CD8-positive, alpha-beta memory T cell (primary cell): ENCODE measurements at regions of chr6 and their contacts with region 1.

Region 1: GRCh38 chr6:6547110-6547879 is 41.2 kb upstream of the LY86 start:
- DNase-seq: peak; percentile 59 to 85 (median 70)
- H3K4me3 ChIP-seq: peak overlapping the region; percentile 52
- H3K4me3 Mint-ChIP-seq: peak overlapping the region; percentile 0 to 88 (median 78)
- H3K27ac ChIP-seq: no peak overlapping the region
- H3K27ac Mint-ChIP-seq: peak overlapping the region in 1 of 8 donors; percentile 20
- H3K4me1 ChIP-seq: no peaks in the 10 kb centered on the region
- H3K4me1 Mint-ChIP-seq: peaks cover 5 to 14% (median 7%) of the 10 kb centered on the region in 3 donors
- H3K27me3 ChIP-seq: peaks cover 25% of the 10 kb centered on the region
- H3K27me3 Mint-ChIP-seq: peaks cover 43 to 50% of the 10 kb centered on the region in 2 donors

Region 2: DNA sequence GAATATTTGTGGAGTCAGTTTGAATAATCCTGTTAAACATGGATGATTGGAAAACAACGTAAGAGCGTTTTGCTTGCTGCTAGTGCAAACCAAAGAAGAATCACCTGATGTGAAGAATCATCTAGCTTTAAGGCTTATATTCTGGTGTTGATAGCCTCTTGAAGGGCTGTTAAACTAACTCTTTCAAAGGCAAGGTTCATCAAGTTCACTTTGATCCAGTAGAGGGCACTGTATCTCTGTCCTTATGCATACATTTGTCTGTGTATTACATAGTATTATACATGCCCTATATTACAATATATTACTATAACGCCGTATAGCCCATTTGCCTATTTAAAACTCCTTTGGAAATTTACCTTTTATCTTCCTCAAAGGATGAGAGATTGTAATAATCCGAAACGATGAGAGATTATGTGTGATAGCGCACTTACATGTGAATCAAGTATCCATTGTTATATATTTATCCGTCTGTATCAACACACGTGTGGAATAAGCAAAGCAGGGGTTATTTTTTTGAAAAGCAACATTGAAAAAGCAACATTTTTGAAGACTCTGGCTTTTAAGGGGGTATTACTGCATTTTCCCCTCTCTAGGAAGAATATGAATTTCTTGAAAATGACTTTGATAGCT is 489.8 kb before region 1 on chr6:
- CTCF ChIA-PET with region 1: interaction called, 13 read pairs
- POLR2A ChIA-PET with region 1: no interaction called
- DNase-seq: peak in 2 of 5 donors; percentile 9 to 31
- H3K4me3 ChIP-seq: no peak overlapping the region
- H3K4me3 Mint-ChIP-seq: no peak overlapping the region
- H3K27ac ChIP-seq: no peak overlapping the region
- H3K27ac Mint-ChIP-seq: no peak overlapping the region
- H3K4me1 ChIP-seq: no peaks in the 10 kb centered on the region
- H3K4me1 Mint-ChIP-seq: no peaks in the 10 kb centered on the region
- H3K27me3 ChIP-seq: no peaks in the 10 kb centered on the region
- H3K27me3 Mint-ChIP-seq: peaks cover 24 to 64% of the 10 kb centered on the region in 2 donors

Region 3: GRCh38 chr6:6366803-6367202 is 180.5 kb before region 1 on chr6:
- CTCF ChIA-PET with region 1: no interaction called
- POLR2A ChIA-PET with region 1: no interaction called
- DNase-seq: no peak
- H3K4me3 ChIP-seq: no peak overlapping the region
- H3K4me3 Mint-ChIP-seq: no peak overlapping the region
- H3K27ac ChIP-seq: no peak overlapping the region
- H3K27ac Mint-ChIP-seq: no peak overlapping the region
- H3K4me1 ChIP-seq: no peaks in the 10 kb centered on the region
- H3K4me1 Mint-ChIP-seq: no peaks in the 10 kb centered on the region
- H3K27me3 ChIP-seq: no peaks in the 10 kb centered on the region
- H3K27me3 Mint-ChIP-seq: peaks cover 11 to 30% of the 10 kb centered on the region in 2 donors

Region 4: GRCh38 chr6:6461138-6461537 is 86.2 kb before region 1 on chr6:
- CTCF ChIA-PET with region 1: no interaction called
- POLR2A ChIA-PET with region 1: no interaction called
- DNase-seq: no peak
- H3K4me3 ChIP-seq: no peak overlapping the region
- H3K4me3 Mint-ChIP-seq: no peak overlapping the region
- H3K27ac ChIP-seq: no peak overlapping the region
- H3K27ac Mint-ChIP-seq: no peak overlapping the region
- H3K4me1 ChIP-seq: no peaks in the 10 kb centered on the region
- H3K4me1 Mint-ChIP-seq: no peaks in the 10 kb centered on the region
- H3K27me3 ChIP-seq: no peaks in the 10 kb centered on the region
- H3K27me3 Mint-ChIP-seq: peaks cover 18 to 44% of the 10 kb centered on the region in 2 donors

Region 5: DNA sequence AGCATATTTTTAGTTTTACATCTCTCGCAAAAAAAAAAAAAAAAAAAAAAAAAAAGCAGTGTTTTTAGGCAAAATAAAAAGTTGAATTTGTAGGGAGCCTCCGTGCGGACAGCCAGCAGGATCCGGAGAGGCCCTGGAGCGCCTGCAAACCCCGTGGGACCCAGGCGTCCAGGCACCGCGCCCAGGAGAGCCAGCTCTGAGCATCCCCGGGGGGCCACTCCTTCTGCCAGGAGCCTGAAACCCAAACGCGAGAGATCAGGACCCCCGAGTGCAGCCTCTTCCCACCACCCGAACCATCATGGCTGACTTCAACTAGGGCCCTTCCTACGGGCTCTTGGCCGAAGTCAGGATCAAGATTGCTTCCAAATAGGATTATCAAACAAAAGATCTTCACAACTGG is 12.9 kb before region 1 on chr6:
- CTCF ChIA-PET with region 1: interaction called, 10 read pairs
- POLR2A ChIA-PET with region 1: interaction called, 5 read pairs
- DNase-seq: no peak
- H3K4me3 ChIP-seq: no peak overlapping the region
- H3K4me3 Mint-ChIP-seq: no peak overlapping the region
- H3K27ac ChIP-seq: no peak overlapping the region
- H3K27ac Mint-ChIP-seq: no peak overlapping the region
- H3K4me1 ChIP-seq: no peaks in the 10 kb centered on the region
- H3K4me1 Mint-ChIP-seq: peaks cover 0 to 9% (median 5%) of the 10 kb centered on the region in 3 donors
- H3K27me3 ChIP-seq: no peaks in the 10 kb centered on the region
- H3K27me3 Mint-ChIP-seq: peaks cover 10 to 41% of the 10 kb centered on the region in 2 donors

Region 6: DNA sequence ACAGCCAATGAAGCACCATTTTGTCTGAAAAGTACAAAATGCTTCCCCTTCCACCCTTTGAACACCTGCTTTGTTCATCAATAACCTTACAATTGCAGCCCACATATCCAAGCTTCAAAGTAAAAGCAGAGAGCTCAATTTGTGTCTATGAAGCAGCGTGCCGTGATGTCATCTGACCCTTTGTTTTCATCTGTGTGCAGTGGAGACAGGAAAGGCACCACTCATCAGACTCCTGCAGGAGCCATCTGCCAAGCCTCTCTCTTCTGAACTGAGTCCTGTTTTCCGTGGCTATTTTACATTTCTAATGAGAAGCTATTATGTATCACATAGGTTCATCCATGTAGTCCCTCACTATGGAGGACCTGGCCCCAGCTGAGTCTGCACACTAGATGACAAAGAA is 33.8 kb after region 1 on chr6:
- CTCF ChIA-PET with region 1: no interaction called
- POLR2A ChIA-PET with region 1: no interaction called
- DNase-seq: peak in 1 of 5 donors; percentile 60
- H3K4me3 ChIP-seq: no peak overlapping the region
- H3K4me3 Mint-ChIP-seq: no peak overlapping the region
- H3K27ac ChIP-seq: no peak overlapping the region
- H3K27ac Mint-ChIP-seq: no peak overlapping the region
- H3K4me1 ChIP-seq: peaks cover 13% of the 10 kb centered on the region
- H3K4me1 Mint-ChIP-seq: peaks cover 7 to 13% (median 11%) of the 10 kb centered on the region in 3 donors
- H3K27me3 ChIP-seq: no peaks in the 10 kb centered on the region
- H3K27me3 Mint-ChIP-seq: peaks cover 0 to 5% of the 10 kb centered on the region in 2 donors

Region 7: GRCh38 chr6:6659600-6660327 is 112.5 kb after region 1 on chr6:
- CTCF ChIA-PET with region 1: interaction called, 10 read pairs
- POLR2A ChIA-PET with region 1: no interaction called
- DNase-seq: peak in 1 of 5 donors; percentile 19
- H3K4me3 ChIP-seq: no peak overlapping the region
- H3K4me3 Mint-ChIP-seq: peak overlapping the region in 2 of 7 donors; percentile 9 to 63
- H3K27ac ChIP-seq: no peak overlapping the region
- H3K27ac Mint-ChIP-seq: peak overlapping the region in 5 of 8 donors; percentile 88 to 97 (median 94)
- H3K4me1 ChIP-seq: peaks cover 46% of the 10 kb centered on the region
- H3K4me1 Mint-ChIP-seq: peaks cover 26 to 75% (median 46%) of the 10 kb centered on the region in 3 donors
- H3K27me3 ChIP-seq: no peaks in the 10 kb centered on the region
- H3K27me3 Mint-ChIP-seq: peaks cover 0 to 2% of the 10 kb centered on the region in 2 donors